B cell (primary cell): ENCODE measurements at regions of chr6 and their contacts with region 1.

Region 1: DNA sequence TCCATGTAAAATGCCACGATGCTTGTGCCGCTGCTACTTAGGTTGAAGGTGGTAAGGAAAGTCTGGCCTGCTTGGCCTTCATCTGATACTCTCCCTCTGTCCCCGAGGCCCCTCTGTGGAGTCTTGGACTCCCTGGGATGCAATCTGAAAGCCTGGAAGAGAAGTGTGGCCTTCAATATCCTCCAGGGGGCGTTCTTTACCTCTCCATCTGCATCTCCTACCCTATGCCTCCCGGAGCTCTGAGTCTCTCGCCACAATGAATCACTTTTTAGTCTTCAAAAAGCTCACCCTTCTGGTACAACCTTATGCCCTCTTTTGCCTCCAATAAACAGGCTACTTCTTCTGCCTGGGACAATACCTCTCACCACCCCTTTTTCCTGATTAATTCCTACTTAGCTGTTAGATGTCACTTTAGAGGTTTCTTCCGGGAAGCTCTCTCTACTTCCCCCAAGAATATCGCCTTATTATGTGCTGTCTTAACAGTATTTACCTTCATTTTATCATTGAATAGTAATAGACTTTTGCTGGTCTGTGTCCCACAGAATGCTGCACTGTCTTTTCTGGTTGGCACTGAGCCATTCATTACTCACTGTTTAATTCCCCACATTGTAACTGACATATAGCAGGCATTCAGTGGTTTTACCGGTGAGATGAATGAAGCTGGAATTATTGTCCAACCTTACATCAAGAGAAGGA is 13.9 kb upstream of the ATG5 start:
- DNase-seq: peak; percentile 66
- ATAC-seq: peak; percentile 74
- H3K4me3 ChIP-seq: peak overlapping the region in 2 of 5 experiments; percentile 17 to 24
- H3K4me3 Mint-ChIP-seq: peak overlapping the region; percentile 61
- H3K27ac ChIP-seq: no peak overlapping the region
- H3K27ac Mint-ChIP-seq: no peak overlapping the region
- H3K4me1 ChIP-seq: peaks cover 5% of the 10 kb centered on the region in 2 donors
- H3K4me1 Mint-ChIP-seq: peaks cover 2% of the 10 kb centered on the region
- H3K27me3 ChIP-seq: peaks cover 0 to 2% (median 0%) of the 10 kb centered on the region in 4 experiments
- H3K27me3 Mint-ChIP-seq: peaks cover 31% of the 10 kb centered on the region
- CTCF ChIP-seq: peak; percentile 81

Region 2: DNA sequence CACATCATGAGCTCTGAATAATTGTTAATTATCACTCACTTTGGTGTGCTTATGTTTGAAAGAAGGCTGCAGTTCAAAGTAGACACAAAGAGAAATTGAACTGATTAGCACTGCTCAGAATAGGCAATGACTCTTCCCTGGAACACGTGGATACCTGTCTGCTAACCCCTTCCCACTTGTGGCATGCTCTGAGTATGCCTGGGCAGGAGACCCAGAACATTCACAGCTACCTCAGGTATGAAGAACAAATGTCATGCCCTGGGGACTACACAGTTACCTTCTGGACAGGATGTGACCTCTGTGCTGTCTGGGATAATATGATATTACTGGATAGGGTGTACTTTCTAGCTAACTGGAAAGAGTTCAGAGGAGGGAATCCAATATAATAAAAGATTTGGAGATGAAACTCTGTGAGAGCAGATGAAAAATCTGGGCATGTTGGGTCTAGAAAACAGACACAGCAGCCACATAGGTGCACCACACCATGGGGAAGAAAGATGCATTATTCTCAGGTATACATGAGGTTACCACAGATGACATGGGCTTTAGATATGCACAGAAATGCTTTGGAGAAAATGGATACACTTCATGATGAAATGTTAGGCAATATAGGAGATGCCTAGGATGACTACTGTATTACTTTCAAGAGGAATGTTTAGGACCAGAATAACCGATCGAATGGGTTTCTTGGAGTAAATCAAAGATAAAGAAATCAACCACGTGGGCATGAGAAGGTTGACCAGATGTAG is 612.4 kb before region 1 on chr6:
- CTCF ChIA-PET with region 1: no interaction called
- POLR2A ChIA-PET with region 1: no interaction called
- intact Hi-C with region 1: no loop called
- DNase-seq: no peak
- ATAC-seq: no peak
- H3K4me3 ChIP-seq: no peak overlapping the region
- H3K4me3 Mint-ChIP-seq: no peak overlapping the region
- H3K27ac ChIP-seq: no peak overlapping the region
- H3K27ac Mint-ChIP-seq: no peak overlapping the region
- H3K4me1 ChIP-seq: no peaks in the 10 kb centered on the region
- H3K4me1 Mint-ChIP-seq: no peaks in the 10 kb centered on the region
- H3K27me3 ChIP-seq: no peaks in the 10 kb centered on the region
- H3K27me3 Mint-ChIP-seq: no peaks in the 10 kb centered on the region
- CTCF ChIP-seq: no peak

Region 3: DNA sequence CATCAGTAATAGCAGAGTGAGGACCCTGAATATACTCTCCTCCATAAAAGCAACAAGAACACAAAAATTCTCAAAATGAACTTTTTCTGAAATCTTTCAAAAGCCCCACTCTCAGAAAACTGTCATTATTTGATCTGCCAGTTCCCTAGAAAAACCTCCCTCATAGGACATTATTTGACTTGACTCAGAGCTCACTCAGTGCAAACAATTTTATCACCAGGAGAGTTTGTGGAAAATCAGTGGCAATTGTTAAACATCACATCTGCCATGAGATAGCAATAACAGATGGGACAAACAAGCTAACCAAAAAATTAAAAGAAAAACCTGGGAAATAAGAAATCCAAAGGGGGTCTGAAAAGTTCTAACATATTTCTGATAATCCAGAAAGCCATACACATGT is 113.9 kb before region 1 on chr6:
- CTCF ChIA-PET with region 1: no interaction called
- POLR2A ChIA-PET with region 1: no interaction called
- intact Hi-C with region 1: no loop called
- DNase-seq: no peak
- ATAC-seq: no peak
- H3K4me3 ChIP-seq: no peak overlapping the region
- H3K4me3 Mint-ChIP-seq: no peak overlapping the region
- H3K27ac ChIP-seq: no peak overlapping the region
- H3K27ac Mint-ChIP-seq: peak overlapping the region; percentile 16
- H3K4me1 ChIP-seq: no peaks in the 10 kb centered on the region
- H3K4me1 Mint-ChIP-seq: peaks cover 4% of the 10 kb centered on the region
- H3K27me3 ChIP-seq: no peaks in the 10 kb centered on the region
- H3K27me3 Mint-ChIP-seq: no peaks in the 10 kb centered on the region
- CTCF ChIP-seq: no peak

Region 4: GRCh38 chr6:106325336-106326178 is 13.9 kb before region 1 on chr6 and contains the start of gene ATG5:
- CTCF ChIA-PET with region 1: interaction called, 13 read pairs
- POLR2A ChIA-PET with region 1: no interaction called
- intact Hi-C with region 1: no loop called
- DNase-seq: peak; percentile 99
- ATAC-seq: peak; percentile 92
- H3K4me3 ChIP-seq: peak within 1 kb of the TSS; percentile 87 to 99 (median 94)
- H3K4me3 Mint-ChIP-seq: peak within 1 kb of the TSS; percentile 100
- H3K27ac ChIP-seq: peak within 1 kb of the TSS; percentile 89 to 91
- H3K27ac Mint-ChIP-seq: peak within 1 kb of the TSS; percentile 98
- H3K4me1 ChIP-seq: peaks cover 16 to 20% of the 10 kb centered on the region in 2 donors
- H3K4me1 Mint-ChIP-seq: peaks cover 44% of the 10 kb centered on the region
- H3K27me3 ChIP-seq: peaks cover 0 to 6% (median 4%) of the 10 kb centered on the region in 4 experiments
- H3K27me3 Mint-ChIP-seq: peaks cover 27% of the 10 kb centered on the region
- CTCF ChIP-seq: no peak
- total RNA-seq, gene ATG5: 26.3 and 34.0 TPM in 2 replicates

Region 5: GRCh38 chr6:106377061-106377540 is 37.6 kb after region 1 on chr6:
- CTCF ChIA-PET with region 1: no interaction called
- POLR2A ChIA-PET with region 1: no interaction called
- intact Hi-C with region 1: no loop called
- DNase-seq: no peak
- ATAC-seq: no peak
- H3K4me3 ChIP-seq: no peak overlapping the region
- H3K4me3 Mint-ChIP-seq: no peak overlapping the region
- H3K27ac ChIP-seq: no peak overlapping the region
- H3K27ac Mint-ChIP-seq: no peak overlapping the region
- H3K4me1 ChIP-seq: no peaks in the 10 kb centered on the region
- H3K4me1 Mint-ChIP-seq: peaks cover 3% of the 10 kb centered on the region
- H3K27me3 ChIP-seq: peaks cover 0 to 3% (median 0%) of the 10 kb centered on the region in 4 experiments
- H3K27me3 Mint-ChIP-seq: peaks cover 12% of the 10 kb centered on the region
- CTCF ChIP-seq: no peak

Region 6: DNA sequence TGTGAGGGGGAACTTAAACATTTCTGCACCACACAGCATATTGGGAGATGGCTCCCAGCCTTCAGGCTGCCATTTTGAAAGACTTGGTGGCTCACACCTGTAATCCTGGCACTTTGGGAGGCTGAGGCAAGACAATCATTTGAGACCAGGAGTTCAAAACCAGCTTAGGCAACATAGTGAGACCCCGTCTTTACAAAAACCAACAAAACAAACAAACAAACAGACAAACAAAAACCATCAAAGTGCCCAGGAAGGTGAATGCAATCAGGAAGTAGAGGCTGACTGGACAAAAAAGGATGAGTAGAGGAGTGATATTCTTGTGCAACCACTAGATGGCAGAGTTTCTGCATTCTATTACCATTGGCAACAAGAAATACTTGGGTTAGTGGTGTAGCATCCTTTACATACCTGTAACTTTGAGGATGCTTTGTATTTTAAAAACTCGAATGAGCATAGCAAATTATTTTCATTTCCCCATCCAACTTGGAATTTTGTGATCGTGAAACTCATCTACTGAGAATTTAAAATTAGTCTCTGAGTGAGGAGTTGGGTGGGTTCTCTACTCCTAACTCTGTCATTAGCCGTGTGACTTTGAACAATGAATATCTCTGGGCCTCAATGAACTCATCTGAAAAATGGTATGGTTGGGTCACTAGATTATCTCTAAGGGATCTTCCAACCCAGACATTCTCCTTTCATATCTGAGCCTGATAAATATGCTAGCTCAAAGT is 105.5 kb after region 1 on chr6:
- CTCF ChIA-PET with region 1: interaction called, 12 read pairs
- POLR2A ChIA-PET with region 1: no interaction called
- intact Hi-C with region 1: loop called (anchors 1 kb)
- DNase-seq: peak; percentile 79
- ATAC-seq: peak; percentile 59
- H3K4me3 ChIP-seq: no peak overlapping the region
- H3K4me3 Mint-ChIP-seq: no peak overlapping the region
- H3K27ac ChIP-seq: no peak overlapping the region
- H3K27ac Mint-ChIP-seq: peak overlapping the region; percentile 60
- H3K4me1 ChIP-seq: peaks cover 19 to 22% of the 10 kb centered on the region in 2 donors
- H3K4me1 Mint-ChIP-seq: peaks cover 20% of the 10 kb centered on the region
- H3K27me3 ChIP-seq: peaks cover 0 to 3% (median 0%) of the 10 kb centered on the region in 4 experiments
- H3K27me3 Mint-ChIP-seq: peaks cover 20% of the 10 kb centered on the region
- CTCF ChIP-seq: peak; percentile 92

Region 7: DNA sequence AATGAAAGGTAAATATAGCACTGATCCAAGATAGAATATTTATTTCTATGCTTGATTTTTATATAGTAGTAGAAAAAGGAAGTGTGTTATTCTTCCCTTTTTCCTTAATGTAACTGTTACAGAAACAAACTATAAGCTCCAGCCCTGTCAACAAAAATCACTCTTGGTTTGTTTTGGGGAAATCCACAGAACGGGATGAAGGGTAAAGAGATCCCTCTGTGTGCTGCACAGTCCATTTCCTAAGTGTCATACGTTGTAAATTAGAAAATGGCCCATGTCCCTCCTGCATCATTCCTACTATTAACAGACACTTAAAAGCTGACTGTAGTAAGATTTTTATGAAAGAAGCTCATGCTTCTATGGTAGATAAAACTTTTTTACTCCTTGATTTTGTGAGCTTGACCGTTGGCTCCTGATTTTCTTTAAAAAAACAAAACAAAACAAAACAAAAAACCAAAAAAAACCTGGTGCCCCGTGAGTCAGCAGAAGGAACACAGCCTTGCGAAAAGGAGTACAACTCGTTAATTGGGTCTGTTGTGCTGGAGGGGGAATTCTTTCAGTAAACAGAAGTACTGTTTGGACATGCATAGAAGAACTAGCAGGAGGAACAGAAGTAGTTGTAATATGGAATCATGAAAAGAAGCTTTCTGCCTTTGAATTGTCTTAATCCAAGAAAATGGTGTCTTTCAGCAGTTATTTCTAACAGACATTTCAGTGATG is 222.4 kb after region 1 on chr6:
- CTCF ChIA-PET with region 1: interaction called, 20 read pairs
- POLR2A ChIA-PET with region 1: interaction called, 10 read pairs
- intact Hi-C with region 1: loop called (anchors 1 kb)
- DNase-seq: no peak
- ATAC-seq: no peak
- H3K4me3 ChIP-seq: no peak overlapping the region
- H3K4me3 Mint-ChIP-seq: no peak overlapping the region
- H3K27ac ChIP-seq: peak overlapping the region in 1 of 2 donors; percentile 29
- H3K27ac Mint-ChIP-seq: peak overlapping the region; percentile 28
- H3K4me1 ChIP-seq: no peaks in the 10 kb centered on the region
- H3K4me1 Mint-ChIP-seq: peaks cover 11% of the 10 kb centered on the region
- H3K27me3 ChIP-seq: no peaks in the 10 kb centered on the region
- H3K27me3 Mint-ChIP-seq: no peaks in the 10 kb centered on the region
- CTCF ChIP-seq: no peak

Region 8: DNA sequence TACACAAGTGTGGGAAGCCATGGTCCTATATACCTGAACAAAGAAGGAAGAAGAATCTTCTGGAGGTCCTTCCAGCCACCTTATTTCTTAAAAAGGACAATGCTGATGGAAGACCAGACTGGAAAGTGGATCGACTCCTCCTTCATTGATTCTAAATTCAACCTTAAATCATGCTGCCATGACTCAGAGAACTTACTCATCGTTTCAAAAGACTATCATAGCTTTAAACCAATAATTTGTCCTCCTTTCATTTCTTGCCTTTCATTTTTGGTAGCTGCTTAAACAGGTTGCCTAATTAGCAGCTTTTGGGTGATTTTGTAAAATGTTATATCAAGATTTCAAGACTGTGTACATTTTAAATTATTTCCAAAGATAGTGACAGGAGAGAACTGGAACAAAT is 229.0 kb after region 1 on chr6:
- CTCF ChIA-PET with region 1: interaction called, 20 read pairs
- POLR2A ChIA-PET with region 1: no interaction called
- intact Hi-C with region 1: loop called (anchors 1 kb)
- DNase-seq: no peak
- ATAC-seq: no peak
- H3K4me3 ChIP-seq: no peak overlapping the region
- H3K4me3 Mint-ChIP-seq: no peak overlapping the region
- H3K27ac ChIP-seq: no peak overlapping the region
- H3K27ac Mint-ChIP-seq: no peak overlapping the region
- H3K4me1 ChIP-seq: no peaks in the 10 kb centered on the region
- H3K4me1 Mint-ChIP-seq: peaks cover 14% of the 10 kb centered on the region
- H3K27me3 ChIP-seq: no peaks in the 10 kb centered on the region
- H3K27me3 Mint-ChIP-seq: no peaks in the 10 kb centered on the region
- CTCF ChIP-seq: no peak

Region 9: DNA sequence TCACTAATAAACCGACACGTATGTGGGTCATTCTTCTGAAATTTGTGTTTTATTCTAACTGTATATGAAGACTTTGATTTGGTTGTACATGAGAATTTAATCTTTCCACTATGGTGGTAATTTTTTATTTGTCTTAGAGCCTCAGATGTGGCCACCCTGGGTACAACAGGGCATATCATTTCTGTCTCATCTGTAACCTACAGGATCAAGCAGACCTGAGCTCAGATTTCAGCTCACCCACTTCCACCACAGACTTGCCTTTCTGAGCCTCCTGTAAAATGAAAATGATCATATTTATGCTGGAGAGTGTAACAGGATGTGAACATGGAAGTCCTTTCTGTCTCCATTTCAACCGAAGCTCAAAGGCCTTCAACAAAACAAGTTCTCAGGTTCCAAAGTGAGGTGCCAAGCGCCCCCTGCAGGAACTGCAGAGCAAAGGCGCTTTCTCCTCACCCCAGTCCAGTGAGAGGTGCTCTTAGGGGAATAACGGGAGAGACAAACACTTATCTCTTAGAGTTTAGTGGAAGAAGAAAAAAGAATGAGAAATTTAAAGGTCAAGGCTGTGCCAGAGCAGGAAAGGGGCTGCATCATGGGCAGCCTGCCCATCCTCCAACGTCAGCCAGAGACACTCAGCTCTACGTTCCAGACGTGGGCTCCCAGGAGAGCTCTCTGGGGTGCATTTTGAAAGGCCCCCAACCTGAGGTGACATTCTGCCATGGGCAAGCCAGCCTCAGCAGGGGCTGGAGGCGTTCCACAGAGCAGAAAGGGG is 658.1 kb after region 1 on chr6:
- CTCF ChIA-PET with region 1: interaction called, 42 read pairs
- POLR2A ChIA-PET with region 1: no interaction called
- intact Hi-C with region 1: loop called (anchors 1 kb)
- DNase-seq: peak; percentile 71
- ATAC-seq: peak; percentile 64
- H3K4me3 ChIP-seq: no peak overlapping the region
- H3K4me3 Mint-ChIP-seq: no peak overlapping the region
- H3K27ac ChIP-seq: no peak overlapping the region
- H3K27ac Mint-ChIP-seq: no peak overlapping the region
- H3K4me1 ChIP-seq: peaks cover 0 to 5% of the 10 kb centered on the region in 2 donors
- H3K4me1 Mint-ChIP-seq: no peaks in the 10 kb centered on the region
- H3K27me3 ChIP-seq: no peaks in the 10 kb centered on the region
- H3K27me3 Mint-ChIP-seq: peaks cover 3% of the 10 kb centered on the region
- CTCF ChIP-seq: peak; percentile 95